B cell (primary cell): ENCODE measurements at regions of chr2 and their contacts with region 1.

Region 1: DNA sequence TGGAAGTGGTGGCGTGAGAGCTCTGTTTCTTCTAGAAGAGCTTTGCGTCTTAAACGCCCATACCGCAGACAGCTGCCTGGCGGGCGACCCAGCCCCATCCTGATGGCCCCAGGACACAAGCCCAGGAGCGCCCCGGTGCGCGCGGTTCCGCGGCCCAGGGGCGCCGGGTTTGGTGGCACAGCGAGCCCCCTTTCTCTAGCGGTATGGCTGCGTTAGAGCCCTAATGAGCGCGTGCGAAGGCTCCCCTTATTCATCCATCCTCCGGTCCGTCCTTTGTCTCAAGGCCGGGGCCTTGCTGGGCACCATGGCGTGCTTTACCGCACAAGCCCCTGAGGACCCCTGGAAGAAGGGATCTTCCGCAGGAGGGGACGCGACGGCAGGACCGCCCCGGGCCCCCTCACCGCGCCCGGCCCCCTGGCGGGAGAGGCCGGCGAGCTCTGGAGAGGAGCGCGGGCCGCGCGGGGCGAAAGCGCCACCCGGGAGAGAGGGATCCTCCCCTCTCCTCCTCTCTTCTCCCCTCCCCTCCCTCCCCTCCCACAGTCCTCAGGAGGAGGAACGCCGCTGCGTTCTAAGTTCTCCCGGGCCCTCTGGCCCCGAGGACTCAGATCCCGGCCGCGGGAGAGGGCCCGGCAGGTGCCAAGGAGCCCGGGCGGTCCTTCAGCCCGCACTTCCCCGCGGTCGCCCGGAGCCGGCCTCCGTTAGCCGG is 626 bp upstream of the SLC1A4 start:
- DNase-seq: peak; percentile 75
- ATAC-seq: peak; percentile 33
- H3K4me3 ChIP-seq: peak overlapping the region; percentile 53 to 87 (median 81)
- H3K4me3 Mint-ChIP-seq: peak overlapping the region; percentile 92
- H3K27ac ChIP-seq: peak overlapping the region in 1 of 2 donors; percentile 53
- H3K27ac Mint-ChIP-seq: peak overlapping the region; percentile 84
- H3K4me1 ChIP-seq: peaks cover 17 to 24% of the 10 kb centered on the region in 2 donors
- H3K4me1 Mint-ChIP-seq: peaks cover 37% of the 10 kb centered on the region
- H3K27me3 ChIP-seq: no peaks in the 10 kb centered on the region
- H3K27me3 Mint-ChIP-seq: no peaks in the 10 kb centered on the region
- CTCF ChIP-seq: peak; percentile 48

Region 2: DNA sequence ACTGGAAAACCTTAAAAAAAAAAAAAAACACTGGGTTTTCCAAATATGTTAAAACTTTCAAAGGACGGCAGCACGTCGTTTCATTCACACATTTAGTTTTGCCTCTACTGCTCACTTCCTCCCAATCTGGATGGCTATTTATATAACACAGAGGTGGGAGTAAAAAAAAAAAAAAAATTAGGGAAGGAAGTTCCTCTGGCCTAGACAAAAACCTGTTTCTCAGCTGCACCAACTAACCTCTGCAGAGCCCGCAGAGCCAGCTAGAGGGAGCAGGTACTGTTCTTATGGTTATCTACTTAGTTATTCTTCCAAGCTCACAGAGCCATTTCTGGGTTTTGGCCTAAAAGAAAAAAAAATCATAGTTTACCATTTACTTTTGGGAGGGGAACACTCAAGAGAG is 28.8 kb after region 1 on chr2:
- CTCF ChIA-PET with region 1: interaction called, 11 read pairs
- POLR2A ChIA-PET with region 1: no interaction called
- intact Hi-C with region 1: no loop called
- DNase-seq: peak; percentile 73
- ATAC-seq: peak; percentile 82
- H3K4me3 ChIP-seq: no peak overlapping the region
- H3K4me3 Mint-ChIP-seq: peak overlapping the region; percentile 55
- H3K27ac ChIP-seq: no peak overlapping the region
- H3K27ac Mint-ChIP-seq: peak overlapping the region; percentile 72
- H3K4me1 ChIP-seq: peaks cover 29 to 35% of the 10 kb centered on the region in 2 donors
- H3K4me1 Mint-ChIP-seq: peaks cover 48% of the 10 kb centered on the region
- H3K27me3 ChIP-seq: no peaks in the 10 kb centered on the region
- H3K27me3 Mint-ChIP-seq: no peaks in the 10 kb centered on the region
- CTCF ChIP-seq: peak; percentile 69

Region 3: GRCh38 chr2:66070721-66071602 is 1082.4 kb after region 1 on chr2:
- CTCF ChIA-PET with region 1: no interaction called
- POLR2A ChIA-PET with region 1: no interaction called
- intact Hi-C with region 1: no loop called
- DNase-seq: no peak
- ATAC-seq: no peak
- H3K4me3 ChIP-seq: no peak overlapping the region
- H3K4me3 Mint-ChIP-seq: no peak overlapping the region
- H3K27ac ChIP-seq: no peak overlapping the region
- H3K27ac Mint-ChIP-seq: no peak overlapping the region
- H3K4me1 ChIP-seq: no peaks in the 10 kb centered on the region
- H3K4me1 Mint-ChIP-seq: no peaks in the 10 kb centered on the region
- H3K27me3 ChIP-seq: no peaks in the 10 kb centered on the region
- H3K27me3 Mint-ChIP-seq: no peaks in the 10 kb centered on the region
- CTCF ChIP-seq: no peak